Right ventricle myocardium superior (tissue), 1 donor: ENCODE measurements at regions of chr1 and their contacts with region 1.

Region 1: GRCh38 chr1:235011599-235012435 is 116.8 kb downstream of the TOMM20 start:
- DNase-seq: peak; percentile 77
- ATAC-seq: peak; percentile 74

Region 2: DNA sequence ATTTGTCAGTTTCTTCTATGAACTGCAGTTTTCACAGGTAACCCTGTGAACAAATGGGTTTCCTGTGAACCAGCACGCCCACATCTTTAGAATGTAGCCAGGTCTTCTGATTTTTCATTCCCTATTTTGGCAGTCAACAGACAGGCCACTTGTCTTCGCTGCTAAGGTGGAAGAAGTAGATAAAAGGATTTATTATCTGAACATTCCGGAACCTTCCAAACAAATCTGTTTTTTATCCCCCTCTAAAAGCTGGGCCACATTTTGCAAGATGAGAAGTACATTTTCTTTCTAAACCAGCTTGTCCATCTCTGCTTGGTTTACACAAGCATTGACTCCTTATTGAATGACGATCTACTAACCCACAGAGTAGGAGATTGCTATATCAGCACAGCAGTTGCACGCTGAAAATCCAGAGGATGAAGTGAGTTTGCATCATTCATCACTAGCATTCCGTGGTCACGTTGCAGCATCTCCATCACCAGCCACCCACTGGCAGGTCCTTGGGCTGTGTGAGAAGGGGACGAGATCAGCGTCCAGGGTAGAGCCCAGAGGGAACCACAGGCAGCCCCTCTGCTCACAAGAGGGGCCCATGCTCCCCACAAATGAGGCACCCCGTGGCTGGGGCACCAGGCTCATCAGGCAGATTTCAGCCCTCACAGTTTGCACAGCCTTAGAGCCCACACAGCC is 33.4 kb after region 1 on chr1:
- intact Hi-C with region 1: no loop called
- DNase-seq: no peak
- ATAC-seq: no peak

Region 3: GRCh38 chr1:235067263-235068172 is 55.7 kb after region 1 on chr1:
- intact Hi-C with region 1: loop called (anchors 10 kb)
- DNase-seq: peak; percentile 84
- ATAC-seq: peak; percentile 74